ENCODE measurements at regions of chr3 and their contacts with region 1.

Region 1: GRCh38 chr3:24582431-24583403 is 88.1 kb upstream of the THRB start:
- DNase-seq: no peak
- H3K4me3 ChIP-seq: no peak overlapping the region
- H3K27ac ChIP-seq: no peak overlapping the region
- H3K4me1 ChIP-seq: no peaks in the 10 kb centered on the region
- H3K27me3 ChIP-seq: no peaks in the 10 kb centered on the region
- CTCF ChIP-seq: peak in 1 of 2 donors; percentile 60

Region 2: GRCh38 chr3:23999012-23999641 is 583.6 kb before region 1 on chr3:
- CTCF ChIA-PET with region 1: no interaction called
- dilution Hi-C with region 1: no loop called
- in situ Hi-C with region 1: no loop called
- intact Hi-C with region 1: loop called (anchors 5 kb)
- DNase-seq: peak; percentile 33
- H3K4me3 ChIP-seq: no peak overlapping the region
- H3K27ac ChIP-seq: no peak overlapping the region
- H3K4me1 ChIP-seq: peaks cover under 1% of the 10 kb centered on the region
- H3K27me3 ChIP-seq: no peaks in the 10 kb centered on the region
- CTCF ChIP-seq: peak; percentile 96 to 100

Region 3: GRCh38 chr3:24185738-24186384 is 396.9 kb before region 1 on chr3:
- CTCF ChIA-PET with region 1: no interaction called
- dilution Hi-C with region 1: no loop called
- in situ Hi-C with region 1: no loop called
- intact Hi-C with region 1: loop called (anchors 5 kb)
- DNase-seq: peak; percentile 58
- H3K4me3 ChIP-seq: no peak overlapping the region
- H3K27ac ChIP-seq: no peak overlapping the region
- H3K4me1 ChIP-seq: no peaks in the 10 kb centered on the region
- H3K27me3 ChIP-seq: no peaks in the 10 kb centered on the region
- CTCF ChIP-seq: peak; percentile 64 to 66

Region 4: DNA sequence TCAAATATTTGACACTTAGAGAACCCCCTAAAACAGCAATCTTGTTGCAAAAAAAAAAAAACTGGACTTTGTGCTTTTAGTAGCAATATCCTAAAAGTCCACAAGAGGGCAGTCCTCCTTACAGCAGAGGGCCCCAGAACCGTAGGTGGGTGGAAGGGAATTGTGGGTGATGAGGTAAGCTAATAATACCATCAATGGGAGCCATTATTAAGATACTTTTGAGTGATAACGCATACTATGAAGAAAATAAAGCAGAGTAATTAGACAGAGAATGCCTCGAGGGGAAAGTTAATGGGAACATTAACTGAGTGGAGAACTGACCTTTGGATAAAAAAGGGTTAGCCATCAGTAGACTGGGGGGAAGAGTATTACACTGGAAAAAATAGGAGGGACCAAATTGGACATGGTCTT is 318.0 kb before region 1 on chr3:
- CTCF ChIA-PET with region 1: interaction called, 4 read pairs
- dilution Hi-C with region 1: no loop called
- in situ Hi-C with region 1: no loop called
- intact Hi-C with region 1: loop called (anchors 1 kb)
- DNase-seq: peak; percentile 29
- H3K4me3 ChIP-seq: no peak overlapping the region
- H3K27ac ChIP-seq: no peak overlapping the region
- H3K4me1 ChIP-seq: no peaks in the 10 kb centered on the region
- H3K27me3 ChIP-seq: no peaks in the 10 kb centered on the region
- CTCF ChIP-seq: peak; percentile 71 to 82

Region 5: GRCh38 chr3:24662449-24663345 is 80.0 kb after region 1 on chr3:
- CTCF ChIA-PET with region 1: no interaction called
- dilution Hi-C with region 1: no loop called
- in situ Hi-C with region 1: no loop called
- intact Hi-C with region 1: no loop called
- DNase-seq: no peak
- H3K4me3 ChIP-seq: no peak overlapping the region
- H3K27ac ChIP-seq: no peak overlapping the region
- H3K4me1 ChIP-seq: no peaks in the 10 kb centered on the region
- H3K27me3 ChIP-seq: no peaks in the 10 kb centered on the region
- CTCF ChIP-seq: no peak